Dorsolateral prefrontal cortex (tissue), 120 donors: ENCODE measurements at regions of chr17 and their contacts with region 1.

Region 1: GRCh38 chr17:75405365-75406221 is at the start of gene GRB2:
- DNase-seq: peak; percentile 95 to 100 (median 98)
- H3K4me3 ChIP-seq: peak within 1 kb of the TSS; percentile 75 to 100 (median 95)
- H3K27ac ChIP-seq: peak within 1 kb of the TSS; percentile 32 to 96 (median 90)
- H3K27me3 ChIP-seq: no peaks in the 10 kb centered on the region
- CTCF ChIP-seq: peak in 44 of 56 donors; percentile 14 to 64 (median 40)
- total RNA-seq, gene GRB2: 79.0 to 181 (median 137) TPM

Region 2: DNA sequence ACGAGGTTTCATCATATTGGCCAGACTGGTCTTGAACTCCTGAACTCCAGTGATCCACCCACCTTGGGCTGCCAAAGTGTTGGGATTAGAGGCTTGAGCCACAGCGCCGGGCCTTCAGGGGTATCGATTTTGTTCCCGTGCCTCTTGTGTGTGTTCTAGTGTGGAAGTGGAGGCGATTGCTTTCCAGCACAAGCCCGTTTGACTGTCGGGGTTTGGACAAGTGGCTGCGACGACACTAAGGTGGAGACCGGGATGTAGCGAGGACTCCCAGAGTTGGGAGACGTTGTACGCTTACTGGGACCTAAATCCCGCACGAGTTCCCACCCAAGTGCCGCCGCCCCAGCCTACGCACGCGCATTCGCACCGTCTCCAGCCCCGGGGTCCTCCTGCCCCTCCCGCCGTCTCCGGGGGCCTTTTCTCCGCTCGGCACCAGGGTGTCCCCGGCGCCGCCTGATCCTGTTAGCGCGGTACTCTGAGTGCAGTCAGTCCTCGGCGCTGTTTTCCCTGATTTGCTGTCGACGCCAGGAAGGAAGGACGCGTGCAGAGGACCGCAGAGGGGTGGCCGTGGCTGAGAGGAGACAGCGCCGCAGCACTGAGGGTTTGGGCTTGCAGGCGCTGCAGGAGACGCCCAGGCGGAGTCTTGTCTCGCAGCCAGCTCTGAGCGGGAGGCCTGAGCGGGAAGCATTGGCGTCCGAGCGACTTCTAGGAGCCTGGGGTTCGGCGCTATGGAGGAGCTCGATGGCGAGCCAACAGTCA is 200.4 kb before region 1 on chr17 and contains the start of gene NUP85:
- intact Hi-C with region 1: no loop called
- DNase-seq: peak; percentile 80 to 97 (median 89)
- H3K4me3 ChIP-seq: peak within 1 kb of the TSS; percentile 68 to 100 (median 94)
- H3K27ac ChIP-seq: peak within 1 kb of the TSS; percentile 94 to 100 (median 99)
- H3K27me3 ChIP-seq: no peaks in the 10 kb centered on the region
- CTCF ChIP-seq: peak in 26 of 56 donors; percentile 8 to 51 (median 22)
- total RNA-seq, gene NUP85: 31.2 to 80.8 (median 50.2) TPM

Region 3: DNA sequence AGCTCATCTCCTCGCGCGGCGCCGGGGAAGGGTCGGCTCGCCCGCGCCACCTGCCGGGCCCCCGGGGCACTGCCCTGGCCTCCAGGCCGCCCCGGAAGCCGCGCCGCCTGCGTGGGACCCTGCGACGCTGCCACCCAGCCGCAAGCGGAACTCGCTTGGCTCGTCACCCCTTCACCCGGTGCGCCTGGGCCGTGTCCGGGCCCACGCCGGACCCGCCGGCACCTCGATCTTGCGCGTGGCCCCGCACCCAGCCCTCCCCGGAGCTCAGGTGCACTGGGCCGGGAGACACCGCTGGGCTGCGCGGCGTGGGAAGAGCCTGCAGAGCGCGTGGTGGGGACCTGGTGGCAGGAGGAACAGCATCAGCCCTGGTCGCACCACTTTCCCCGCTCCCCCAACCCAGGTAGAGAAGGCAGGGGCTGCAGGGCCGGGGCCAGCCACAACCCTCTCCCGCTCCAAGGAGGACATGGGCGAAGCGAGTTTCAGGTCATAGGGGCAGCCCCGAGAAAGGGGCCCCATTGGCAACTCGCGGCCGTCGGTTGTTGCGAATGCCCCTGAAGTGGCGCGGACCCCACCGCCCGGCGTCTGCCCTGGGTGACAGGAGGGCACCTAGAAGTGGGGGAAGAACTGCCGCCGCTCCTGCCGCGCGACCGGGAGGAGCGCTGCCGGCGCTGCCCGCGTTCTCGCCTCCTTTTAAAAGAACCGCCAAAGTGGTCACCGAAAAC is 134.2 kb before region 1 on chr17:
- intact Hi-C with region 1: loop called in 1 of 2 experiments (anchors 5 kb)
- DNase-seq: peak; percentile 40 to 87 (median 70)
- H3K4me3 ChIP-seq: peak overlapping the region; percentile 62 to 98 (median 91)
- H3K27ac ChIP-seq: peak overlapping the region in 56 of 59 donors; percentile 10 to 97 (median 84)
- H3K27me3 ChIP-seq: no peaks in the 10 kb centered on the region
- CTCF ChIP-seq: peak; percentile 34 to 94 (median 73)

Region 4: DNA sequence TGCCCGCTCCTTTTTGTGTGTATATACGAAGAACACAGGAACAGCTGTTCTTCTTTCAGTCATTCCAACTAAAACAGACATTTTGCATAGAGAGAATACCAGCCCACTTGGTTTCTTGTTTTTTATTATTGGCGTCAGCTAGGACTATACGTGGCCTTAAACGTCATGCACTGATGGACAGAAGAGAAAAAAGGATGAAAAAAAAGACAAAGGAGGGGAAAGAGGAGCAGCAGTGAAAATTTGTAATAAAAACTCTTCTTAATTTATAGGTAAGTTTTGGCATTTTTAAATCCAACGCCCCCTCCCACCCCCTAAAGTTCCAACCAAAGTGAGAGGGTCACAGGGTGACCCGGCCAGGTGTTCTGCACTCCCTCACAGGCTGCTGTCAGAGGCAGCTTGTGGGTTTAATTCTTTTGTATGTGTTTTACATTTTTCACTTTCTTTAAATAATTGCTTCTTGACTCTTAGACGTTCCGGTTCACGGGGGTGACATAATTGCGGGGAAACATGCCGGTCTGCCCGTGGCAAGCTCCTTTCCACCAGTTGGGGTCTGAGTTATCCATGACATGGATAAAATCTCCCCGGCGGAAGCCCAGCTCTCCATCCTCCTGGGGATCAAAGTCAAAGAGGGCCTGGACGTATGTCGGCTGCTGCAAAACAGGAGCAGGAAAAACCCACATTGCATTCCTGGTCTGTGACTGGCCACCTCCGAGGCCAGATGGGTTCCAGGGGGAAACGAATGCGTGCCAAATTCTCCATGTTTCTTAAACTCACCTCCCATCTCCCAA is 85.5 kb before region 1 on chr17:
- intact Hi-C with region 1: loop called (anchors 1 kb)
- DNase-seq: no peak
- H3K4me3 ChIP-seq: no peak overlapping the region
- H3K27ac ChIP-seq: no peak overlapping the region
- H3K27me3 ChIP-seq: no peaks in the 10 kb centered on the region
- CTCF ChIP-seq: no peak

Region 5: DNA sequence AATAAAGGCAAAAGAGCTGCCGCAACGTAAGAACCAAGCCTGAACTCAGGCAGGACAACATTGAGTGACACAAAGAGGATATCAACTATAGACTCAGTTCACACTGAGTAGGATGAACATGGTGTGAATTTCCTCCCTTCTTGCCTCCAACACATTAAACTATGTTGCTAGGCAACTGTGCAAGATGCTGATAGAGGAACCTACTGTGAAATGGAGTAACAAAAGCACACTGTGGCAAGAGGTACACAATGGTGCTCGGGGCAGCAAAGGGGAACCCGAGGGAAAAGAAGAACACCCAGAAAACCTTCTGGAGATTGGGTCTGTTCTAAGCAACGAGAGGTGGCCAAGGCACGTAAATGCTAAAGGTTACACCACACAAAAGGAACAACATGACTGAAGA is 34.3 kb before region 1 on chr17:
- intact Hi-C with region 1: loop called in 1 of 2 experiments (anchors 2 kb)
- DNase-seq: no peak
- H3K4me3 ChIP-seq: no peak overlapping the region
- H3K27ac ChIP-seq: peak overlapping the region in 55 of 59 donors; percentile 9 to 91 (median 77)
- H3K27me3 ChIP-seq: no peaks in the 10 kb centered on the region
- CTCF ChIP-seq: no peak

Region 6: GRCh38 chr17:75393523-75394331 is 11.9 kb before region 1 on chr17:
- intact Hi-C with region 1: loop called in 1 of 2 experiments (anchors 1 kb)
- DNase-seq: peak; percentile 98 to 99 (median 99)
- H3K4me3 ChIP-seq: peak overlapping the region; percentile 54 to 99 (median 77)
- H3K27ac ChIP-seq: peak overlapping the region; percentile 55 to 97 (median 91)
- H3K27me3 ChIP-seq: no peaks in the 10 kb centered on the region
- CTCF ChIP-seq: peak in 37 of 56 donors; percentile 4 to 52 (median 24)

Region 7: DNA sequence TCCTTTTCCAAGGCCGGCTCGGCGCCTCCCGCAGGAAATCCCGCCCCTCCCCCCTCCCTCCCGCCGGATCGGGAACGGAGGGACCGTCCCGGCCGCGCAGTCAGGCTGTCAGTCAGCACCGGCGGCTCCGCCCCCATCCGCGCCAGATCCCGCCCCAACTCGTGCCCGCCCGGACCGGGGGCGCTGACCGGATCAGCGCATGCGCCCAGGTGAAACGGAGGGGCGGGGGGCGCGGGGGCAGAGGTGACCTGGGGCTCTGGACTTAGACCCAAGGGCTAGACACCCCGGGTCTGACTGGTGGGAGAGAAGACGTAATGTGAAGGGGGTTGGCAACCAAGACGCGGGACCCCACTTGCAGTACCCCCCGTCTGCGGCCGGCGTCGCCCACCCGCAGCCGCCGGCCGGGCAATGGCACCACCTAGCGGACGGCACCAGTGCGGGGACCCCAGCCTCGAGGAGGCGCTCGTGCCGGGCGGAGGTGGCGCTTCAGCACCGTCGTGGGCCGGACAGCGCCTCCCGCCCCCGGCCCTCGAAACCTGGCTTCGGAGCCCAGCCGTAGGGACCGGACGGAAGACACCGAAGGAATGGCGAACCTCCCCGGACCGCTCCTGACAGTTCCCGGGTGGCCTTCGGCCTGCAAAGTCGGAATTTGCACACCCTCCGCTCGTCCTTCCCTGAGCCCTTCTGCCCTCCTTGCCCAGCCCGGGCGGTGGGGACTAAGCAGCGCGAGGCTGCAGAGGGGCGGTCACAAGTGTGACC is 110.1 kb after region 1 on chr17 and contains the start of gene CASKIN2:
- intact Hi-C with region 1: loop called in 1 of 2 experiments (anchors 5 kb)
- DNase-seq: peak; percentile 93 to 97 (median 95)
- H3K4me3 ChIP-seq: peak within 1 kb of the TSS; percentile 55 to 99 (median 90)
- H3K27ac ChIP-seq: peak within 1 kb of the TSS; percentile 76 to 99 (median 95)
- H3K27me3 ChIP-seq: no peaks in the 10 kb centered on the region
- CTCF ChIP-seq: peak; percentile 68 to 99 (median 95)
- total RNA-seq, gene CASKIN2: 23.3 to 80.3 (median 41.6) TPM